Heart right ventricle (tissue), 16 donors: ENCODE measurements at regions of chr2 and their contacts with region 1.

Region 1: DNA sequence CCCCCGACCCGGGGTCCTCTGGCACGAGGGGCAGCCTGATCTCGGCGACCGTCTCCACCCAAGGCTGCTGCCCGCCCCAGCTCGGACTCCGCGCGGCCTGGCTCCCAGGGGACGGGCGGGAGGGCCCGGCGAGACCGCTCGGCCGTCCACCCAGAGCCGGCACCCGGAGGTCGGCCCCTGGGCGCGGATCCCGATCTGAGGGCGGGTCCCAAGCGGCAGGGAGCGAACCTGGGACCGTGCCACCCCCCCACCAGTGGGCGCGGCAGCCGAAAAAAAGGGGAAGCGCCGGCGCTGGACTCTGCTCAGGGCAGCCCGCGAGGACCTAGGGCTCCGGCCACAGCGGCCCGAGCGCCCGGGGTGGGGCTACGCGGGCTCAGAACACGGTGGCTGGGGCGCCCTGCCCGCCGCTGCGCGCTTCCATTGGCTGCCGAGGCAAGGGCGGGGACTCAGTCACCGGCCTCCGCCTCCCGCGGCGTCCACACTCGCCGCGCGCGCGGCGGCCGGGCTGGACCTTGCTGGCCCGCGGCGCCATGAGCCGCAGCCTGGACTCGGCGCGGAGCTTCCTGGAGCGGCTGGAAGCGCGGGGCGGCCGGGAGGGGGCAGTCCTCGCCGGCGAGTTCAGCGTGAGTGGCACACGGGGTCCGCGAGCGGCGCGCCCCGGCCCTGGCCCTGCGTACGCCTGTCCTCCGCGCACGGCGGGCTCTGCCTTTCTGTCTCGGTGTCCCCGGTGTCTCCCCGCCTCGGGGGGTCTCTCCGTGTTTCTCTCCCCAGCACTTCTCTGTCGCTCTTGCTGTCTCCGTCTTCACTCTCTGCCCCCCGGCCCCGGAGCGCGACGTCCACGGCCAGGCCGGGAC is at the start of gene PTPN18:
- DNase-seq: peak; percentile 89 to 94
- ATAC-seq: peak; percentile 97
- H3K4me3 ChIP-seq: peak within 1 kb of the TSS; percentile 45 to 93 (median 76)
- H3K27ac ChIP-seq: peak within 1 kb of the TSS; percentile 2 to 95 (median 88)
- H3K4me1 ChIP-seq: peaks cover 3 to 46% (median 39%) of the 10 kb centered on the region in 9 donors
- H3K27me3 ChIP-seq: no peaks in the 10 kb centered on the region
- CTCF ChIP-seq: peak; percentile 29 to 84 (median 61)
- total RNA-seq, gene PTPN18: 7.8 to 24.3 (median 11.2) TPM

Region 2: DNA sequence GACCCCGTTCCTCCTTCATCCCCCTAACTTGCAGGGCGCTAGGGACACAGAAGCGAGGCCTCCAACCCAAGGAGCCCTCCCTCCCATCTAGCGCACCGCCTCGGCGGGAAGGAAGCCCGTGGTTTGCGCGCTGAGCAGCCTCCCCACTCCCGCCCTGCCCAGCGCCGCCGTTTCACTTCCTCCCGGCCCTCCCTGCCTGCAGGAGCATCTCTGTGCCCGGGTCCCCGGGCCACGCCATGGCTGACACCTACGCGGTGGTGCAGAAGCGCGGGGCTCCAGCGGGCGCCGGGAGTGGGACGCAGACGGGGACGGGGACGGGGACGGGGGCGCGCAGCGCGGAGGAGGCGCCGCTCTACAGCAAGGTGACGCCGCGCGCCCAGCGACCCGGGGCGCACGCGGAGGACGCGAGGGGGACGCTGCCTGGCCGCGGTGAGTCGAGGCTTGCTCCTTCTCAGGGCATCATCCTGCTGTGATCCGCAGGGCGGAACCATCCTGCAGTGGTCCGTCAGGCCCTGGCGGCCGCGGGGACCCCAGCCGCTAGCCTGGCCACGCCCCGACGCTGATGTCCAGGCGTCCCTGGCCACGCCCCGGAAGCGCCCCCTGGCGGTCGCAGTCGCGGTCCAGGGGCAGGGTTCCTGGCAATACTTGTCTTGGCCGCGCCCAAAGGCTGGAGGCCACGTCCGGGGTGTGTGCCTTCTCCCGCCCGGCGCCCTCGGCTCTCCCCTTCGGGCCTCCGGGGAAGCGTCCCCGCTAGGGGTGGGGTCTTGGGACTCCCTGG is 16.4 kb after region 1 on chr2:
- intact Hi-C with region 1: loop called in 1 of 10 experiments (anchors 2 kb)
- DNase-seq: peak; percentile 89 to 95
- ATAC-seq: peak; percentile 92 to 97 (median 96)
- H3K4me3 ChIP-seq: peak overlapping the region; percentile 74 to 92 (median 87)
- H3K27ac ChIP-seq: peak overlapping the region; percentile 80 to 98 (median 94)
- H3K4me1 ChIP-seq: peaks cover 3 to 67% (median 20%) of the 10 kb centered on the region in 9 donors
- H3K27me3 ChIP-seq: no peaks in the 10 kb centered on the region
- CTCF ChIP-seq: peak; percentile 89 to 97 (median 93)

Region 3: GRCh38 chr2:130391058-130391871 is 35.5 kb after region 1 on chr2:
- intact Hi-C with region 1: loop called in 1 of 10 experiments (anchors 5 kb)
- DNase-seq: peak; percentile 76 to 86
- ATAC-seq: peak; percentile 84 to 93 (median 89)
- H3K4me3 ChIP-seq: peak overlapping the region; percentile 45 to 81 (median 68)
- H3K27ac ChIP-seq: peak overlapping the region; percentile 80 to 94 (median 89)
- H3K4me1 ChIP-seq: peaks cover 6 to 54% (median 43%) of the 10 kb centered on the region in 9 donors
- H3K27me3 ChIP-seq: no peaks in the 10 kb centered on the region
- CTCF ChIP-seq: no peak

Region 4: GRCh38 chr2:130727286-130728018 is 371.6 kb after region 1 on chr2:
- intact Hi-C with region 1: no loop called
- DNase-seq: peak; percentile 71 to 79
- ATAC-seq: peak; percentile 92 to 98 (median 96)
- H3K4me3 ChIP-seq: peak overlapping the region; percentile 43 to 77 (median 58)
- H3K27ac ChIP-seq: peak overlapping the region in 9 of 10 donors; percentile 19 to 77 (median 60)
- H3K4me1 ChIP-seq: peaks cover 6 to 23% (median 17%) of the 10 kb centered on the region in 9 donors
- H3K27me3 ChIP-seq: peaks cover 0 to 23% (median 0%) of the 10 kb centered on the region in 7 donors
- CTCF ChIP-seq: peak in 1 of 9 donors; percentile 4